GM12878 (cell line): ENCODE measurements at regions of chr6 and their contacts with region 1.

Region 1: GRCh38 chr6:26383624-26384417 is 913 bp downstream of the BTN2A2 start:
- DNase-seq: no peak
- ATAC-seq: peak; percentile 70
- H3K4me3 ChIP-seq: peak overlapping the region; percentile 89
- H3K27ac ChIP-seq: peak overlapping the region; percentile 86
- H3K4me1 ChIP-seq: peaks cover 31% of the 10 kb centered on the region
- H3K27me3 ChIP-seq: no peaks in the 10 kb centered on the region
- CTCF ChIP-seq: no peak
- EP300 ChIP-seq: no peak
- POLR2A ChIP-seq: no peak
- RAD21 ChIP-seq: no peak

Region 2: GRCh38 chr6:26394289-26394688 is 10.5 kb after region 1 on chr6:
- CTCF ChIA-PET with region 1: interaction called, 3 read pairs
- POLR2A ChIA-PET with region 1: interaction called, 10 read pairs
- RAD21 ChIA-PET with region 1: interaction called, 3 read pairs
- SMC1A ChIA-PET with region 1: interaction called, 8 read pairs
- in situ Hi-C with region 1: no loop called
- intact Hi-C with region 1: no loop called
- DNase-seq: no peak
- ATAC-seq: no peak
- H3K4me3 ChIP-seq: no peak overlapping the region
- H3K27ac ChIP-seq: no peak overlapping the region
- H3K4me1 ChIP-seq: peaks cover 8% of the 10 kb centered on the region
- H3K27me3 ChIP-seq: no peaks in the 10 kb centered on the region
- CTCF ChIP-seq: no peak
- EP300 ChIP-seq: no peak
- POLR2A ChIP-seq: no peak
- RAD21 ChIP-seq: no peak